OCI-LY7 (cell line): ENCODE measurements at regions of chr15 and their contacts with region 1.

Region 1: GRCh38 chr15:59448871-59449270 is 10.9 kb downstream of the FAM81A start:
- DNase-seq: no peak
- H3K4me3 ChIP-seq: no peak overlapping the region
- H3K27ac ChIP-seq: no peak overlapping the region
- H3K4me1 ChIP-seq: no peaks in the 10 kb centered on the region
- CTCF ChIP-seq: no peak

Region 2: GRCh38 chr15:59473226-59473625 is 24.4 kb after region 1 on chr15:
- CTCF ChIA-PET with region 1: no interaction called
- POLR2A ChIA-PET with region 1: interaction called, 3 read pairs
- intact Hi-C with region 1: loop called (anchors 2 kb)
- DNase-seq: no peak
- H3K4me3 ChIP-seq: no peak overlapping the region
- H3K27ac ChIP-seq: no peak overlapping the region
- H3K4me1 ChIP-seq: no peaks in the 10 kb centered on the region
- CTCF ChIP-seq: no peak

Region 3: DNA sequence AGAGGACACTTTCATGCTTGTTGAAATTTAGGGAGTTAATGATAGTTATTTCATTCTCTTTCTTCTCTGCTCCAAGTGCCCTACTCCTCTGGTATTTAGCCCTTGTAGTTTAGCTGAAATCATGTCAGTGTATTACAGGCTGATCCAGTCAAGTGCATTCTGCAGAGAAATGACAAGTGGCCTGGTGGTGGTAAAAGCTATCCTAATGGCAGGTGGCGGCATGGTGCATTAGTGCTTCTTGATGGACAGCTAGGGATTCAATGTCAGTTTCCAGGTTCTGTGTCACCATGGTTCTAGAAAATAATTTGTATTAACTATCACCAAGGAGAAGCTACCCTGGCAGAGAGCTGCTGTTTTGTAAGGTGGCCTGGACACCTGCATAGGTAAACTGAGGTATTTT is 330.2 kb after region 1 on chr15:
- CTCF ChIA-PET with region 1: no interaction called
- POLR2A ChIA-PET with region 1: no interaction called
- intact Hi-C with region 1: no loop called
- DNase-seq: no peak
- H3K4me3 ChIP-seq: no peak overlapping the region
- H3K27ac ChIP-seq: no peak overlapping the region
- H3K4me1 ChIP-seq: no peaks in the 10 kb centered on the region
- CTCF ChIP-seq: no peak